Activated T-helper 1 cell treated with anti-CD3 and anti-CD28 coated beads, Interleukin-12 subunit alpha, Interleukin-12 subunit beta, Interleukin-2, Interleukin-4 antibody, amounts not matched to agents 30 ng/mL and 10 ng/mL and 1 ng/mL, durations not matched to agents 14 hours and 24 hours and 36 hours (primary cell): ENCODE measurements at regions of chr11 and their contacts with region 1.

Region 1: DNA sequence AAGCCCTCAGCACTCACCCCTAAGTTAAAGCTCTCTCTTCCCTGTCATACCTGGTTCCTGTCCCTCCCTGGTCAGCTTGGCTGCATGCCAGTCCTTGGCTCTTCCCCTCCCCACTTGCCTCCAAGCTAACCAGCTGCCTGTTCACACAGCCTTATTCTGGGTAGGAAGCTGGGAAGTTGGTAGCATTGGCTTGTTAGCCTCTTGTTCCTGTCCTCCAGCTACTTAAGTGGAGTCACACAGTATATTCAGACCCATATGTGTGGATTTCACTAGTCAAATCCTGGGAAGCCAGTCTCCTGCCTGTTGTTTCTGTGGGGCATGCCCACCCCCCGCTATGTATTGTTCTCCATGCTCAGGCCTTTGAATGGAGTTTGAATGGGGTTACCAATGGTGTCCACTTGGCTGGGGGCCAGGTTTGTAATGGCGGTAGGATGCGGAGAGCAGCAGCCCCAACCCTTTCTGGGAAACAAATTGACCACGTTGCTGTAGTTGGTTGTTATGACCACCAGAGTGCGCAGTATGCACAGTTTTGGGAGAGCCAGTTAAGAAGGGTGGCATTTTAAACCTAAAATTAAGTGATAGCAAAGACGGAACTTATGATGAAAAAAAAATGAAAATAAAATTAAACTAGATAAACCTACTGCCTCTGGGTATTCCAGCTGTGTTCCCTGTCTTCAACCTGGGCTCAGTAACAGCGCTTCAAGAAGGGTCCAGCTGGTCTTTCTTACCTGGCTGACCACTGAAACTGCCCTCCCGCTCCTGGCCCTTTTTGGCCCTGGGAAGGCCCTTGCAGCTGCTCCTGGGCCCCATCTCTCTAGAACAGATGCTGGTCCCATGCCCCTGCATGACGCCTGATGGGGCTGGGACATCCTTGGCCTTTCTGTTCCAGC is 10.7 kb upstream of the RPS3 start:
- DNase-seq: peak; percentile 64
- H3K4me3 Mint-ChIP-seq: no peak overlapping the region
- H3K27ac Mint-ChIP-seq: no peak overlapping the region
- H3K4me1 Mint-ChIP-seq: peaks cover 10% of the 10 kb centered on the region
- H3K27me3 Mint-ChIP-seq: peaks cover 25% of the 10 kb centered on the region

Region 2: DNA sequence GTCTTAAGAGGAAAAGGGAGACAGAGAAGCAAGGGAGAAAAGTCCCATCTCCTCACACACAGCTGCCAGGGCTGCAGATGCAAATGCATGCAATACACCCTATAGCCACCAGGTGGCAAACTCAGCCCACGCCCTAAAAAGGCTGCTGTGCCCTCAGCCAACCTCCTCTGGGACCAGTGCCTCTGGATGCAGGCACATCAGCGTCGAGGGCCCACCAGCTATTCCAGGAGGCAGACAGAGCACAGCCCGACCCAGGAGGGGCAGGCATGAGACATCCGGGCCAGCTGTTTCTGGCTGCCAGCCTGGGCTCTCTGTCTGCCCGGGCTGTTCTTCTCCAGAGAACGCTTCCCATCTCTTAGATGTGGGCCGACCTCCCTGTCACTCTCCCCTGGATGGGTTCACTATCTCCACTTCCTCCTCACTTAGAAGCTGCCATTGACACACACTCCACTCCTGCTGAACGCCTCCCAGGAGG is 108.4 kb before region 1 on chr11:
- intact Hi-C with region 1: loop called (anchors 1 kb)
- DNase-seq: peak; percentile 68
- H3K4me3 Mint-ChIP-seq: no peak overlapping the region
- H3K27ac Mint-ChIP-seq: no peak overlapping the region
- H3K4me1 Mint-ChIP-seq: peaks cover 37% of the 10 kb centered on the region
- H3K27me3 Mint-ChIP-seq: no peaks in the 10 kb centered on the region

Region 3: GRCh38 chr11:75328426-75329277 is 60.0 kb before region 1 on chr11:
- intact Hi-C with region 1: loop called (anchors 1 kb)
- DNase-seq: peak; percentile 58
- H3K4me3 Mint-ChIP-seq: peak overlapping the region; percentile 31
- H3K27ac Mint-ChIP-seq: peak overlapping the region; percentile 74
- H3K4me1 Mint-ChIP-seq: peaks cover 65% of the 10 kb centered on the region
- H3K27me3 Mint-ChIP-seq: peaks cover 2% of the 10 kb centered on the region

Region 4: DNA sequence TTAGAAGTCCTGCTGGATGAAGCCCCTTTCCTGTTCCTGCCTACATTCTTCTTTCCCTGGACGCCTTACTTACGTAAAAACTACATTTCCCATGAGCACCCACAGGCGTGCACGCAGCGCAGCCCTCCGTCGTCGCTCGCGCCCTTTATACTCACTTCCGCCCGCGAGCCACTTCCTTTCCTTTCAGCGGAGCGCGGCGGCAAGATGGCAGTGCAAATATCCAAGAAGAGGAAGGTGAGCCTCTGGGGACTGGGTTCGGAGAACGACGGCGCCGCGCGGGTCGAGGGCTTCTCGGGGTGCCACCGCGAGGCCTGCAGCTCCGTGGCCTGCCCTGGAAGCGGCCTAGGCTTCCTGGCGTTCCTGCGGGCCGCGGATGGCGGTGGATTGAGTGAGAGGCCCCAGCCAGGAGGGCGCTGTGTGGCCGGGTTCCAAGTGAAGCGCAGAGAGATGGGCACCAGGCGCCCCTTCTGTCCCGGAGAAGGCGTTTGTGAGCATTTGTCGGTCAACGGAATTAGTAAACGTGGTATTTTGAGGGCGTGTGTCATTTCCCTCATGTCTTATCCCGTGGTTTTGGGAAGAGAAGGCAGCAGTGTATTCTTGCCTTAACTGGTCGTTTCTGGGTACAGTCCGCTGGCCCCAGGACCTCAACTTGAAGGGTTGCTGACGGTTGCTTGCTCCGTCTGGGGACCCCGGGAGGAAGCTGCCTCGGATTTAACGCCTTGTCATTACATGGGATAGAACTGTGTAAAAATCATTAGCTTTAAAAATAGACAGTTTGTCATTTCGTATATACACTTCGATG is 10.9 kb after region 1 on chr11 and contains the start of gene RPS3:
- intact Hi-C with region 1: loop called (anchors 1 kb)
- DNase-seq: peak; percentile 86
- H3K4me3 Mint-ChIP-seq: peak within 1 kb of the TSS; percentile 99
- H3K27ac Mint-ChIP-seq: peak within 1 kb of the TSS; percentile 90
- H3K4me1 Mint-ChIP-seq: peaks cover 51% of the 10 kb centered on the region
- H3K27me3 Mint-ChIP-seq: peaks cover 3% of the 10 kb centered on the region
- total RNA-seq, gene RPS3: 2,822 and 2,924 TPM in 2 replicates

Region 5: GRCh38 chr11:75445315-75445953 is 56.8 kb after region 1 on chr11:
- intact Hi-C with region 1: loop called (anchors 1 kb)
- DNase-seq: peak; percentile 46
- H3K4me3 Mint-ChIP-seq: no peak overlapping the region
- H3K27ac Mint-ChIP-seq: no peak overlapping the region
- H3K4me1 Mint-ChIP-seq: no peaks in the 10 kb centered on the region
- H3K27me3 Mint-ChIP-seq: peaks cover 4% of the 10 kb centered on the region

Region 6: DNA sequence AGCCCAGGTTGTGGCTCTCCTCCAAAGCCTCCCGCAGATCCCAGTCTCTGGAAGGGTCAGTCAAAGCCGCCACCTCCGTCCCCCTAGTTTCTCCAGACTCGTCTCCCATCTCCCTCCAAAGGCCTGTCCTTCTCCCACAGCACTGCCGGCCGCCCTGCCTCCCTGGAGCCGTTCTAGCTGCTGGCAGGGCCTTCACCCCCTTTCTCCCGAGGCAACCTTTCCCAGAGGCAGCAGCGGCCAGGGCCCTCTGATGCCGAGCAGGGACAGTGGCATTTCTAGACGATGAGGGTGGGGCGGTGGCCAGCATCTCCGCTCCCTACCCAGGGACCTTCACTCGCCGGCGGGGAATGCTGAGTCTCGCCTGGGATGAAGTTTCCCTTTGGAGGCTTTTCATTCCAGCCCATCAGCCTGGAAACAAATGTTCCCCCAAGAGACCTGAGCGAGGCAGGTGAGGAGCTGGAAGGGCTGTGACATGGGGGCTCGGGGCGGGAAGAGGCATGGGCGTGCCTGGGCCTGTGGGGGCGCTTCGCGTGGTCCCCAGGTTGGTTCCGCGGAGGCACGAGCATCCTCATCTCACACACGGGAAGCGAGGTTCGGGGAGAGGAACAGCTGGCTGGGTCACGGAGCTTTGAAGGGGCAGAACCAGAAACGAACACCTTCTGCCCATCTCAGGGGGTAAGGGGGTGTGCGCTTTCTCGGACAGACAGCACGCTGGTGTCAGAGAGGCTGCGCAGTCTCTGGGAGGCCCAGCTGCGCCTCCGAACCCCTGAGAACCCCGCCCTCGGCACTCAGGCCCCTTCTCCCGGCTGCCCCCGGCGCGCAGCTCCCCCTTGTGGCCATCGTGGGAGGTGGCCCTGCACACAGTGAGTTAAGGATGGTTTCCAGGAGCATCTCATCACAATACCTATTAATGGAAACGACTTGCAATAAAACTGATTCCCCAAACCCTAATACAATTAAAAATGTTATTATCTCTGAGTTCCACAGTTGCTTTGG is 62.5 kb after region 1 on chr11:
- intact Hi-C with region 1: loop called (anchors 1 kb)
- DNase-seq: peak; percentile 21
- H3K4me3 Mint-ChIP-seq: no peak overlapping the region
- H3K27ac Mint-ChIP-seq: no peak overlapping the region
- H3K4me1 Mint-ChIP-seq: no peaks in the 10 kb centered on the region
- H3K27me3 Mint-ChIP-seq: peaks cover 6% of the 10 kb centered on the region

Region 7: GRCh38 chr11:75532200-75533048 is 143.8 kb after region 1 on chr11:
- intact Hi-C with region 1: loop called (anchors 1 kb)
- DNase-seq: peak; percentile 74
- H3K4me3 Mint-ChIP-seq: peak overlapping the region; percentile 1
- H3K27ac Mint-ChIP-seq: no peak overlapping the region
- H3K4me1 Mint-ChIP-seq: peaks cover 35% of the 10 kb centered on the region
- H3K27me3 Mint-ChIP-seq: peaks cover 12% of the 10 kb centered on the region